HepG2 (cell line): ENCODE measurements at regions of chr6 and their contacts with region 1.

Region 1: DNA sequence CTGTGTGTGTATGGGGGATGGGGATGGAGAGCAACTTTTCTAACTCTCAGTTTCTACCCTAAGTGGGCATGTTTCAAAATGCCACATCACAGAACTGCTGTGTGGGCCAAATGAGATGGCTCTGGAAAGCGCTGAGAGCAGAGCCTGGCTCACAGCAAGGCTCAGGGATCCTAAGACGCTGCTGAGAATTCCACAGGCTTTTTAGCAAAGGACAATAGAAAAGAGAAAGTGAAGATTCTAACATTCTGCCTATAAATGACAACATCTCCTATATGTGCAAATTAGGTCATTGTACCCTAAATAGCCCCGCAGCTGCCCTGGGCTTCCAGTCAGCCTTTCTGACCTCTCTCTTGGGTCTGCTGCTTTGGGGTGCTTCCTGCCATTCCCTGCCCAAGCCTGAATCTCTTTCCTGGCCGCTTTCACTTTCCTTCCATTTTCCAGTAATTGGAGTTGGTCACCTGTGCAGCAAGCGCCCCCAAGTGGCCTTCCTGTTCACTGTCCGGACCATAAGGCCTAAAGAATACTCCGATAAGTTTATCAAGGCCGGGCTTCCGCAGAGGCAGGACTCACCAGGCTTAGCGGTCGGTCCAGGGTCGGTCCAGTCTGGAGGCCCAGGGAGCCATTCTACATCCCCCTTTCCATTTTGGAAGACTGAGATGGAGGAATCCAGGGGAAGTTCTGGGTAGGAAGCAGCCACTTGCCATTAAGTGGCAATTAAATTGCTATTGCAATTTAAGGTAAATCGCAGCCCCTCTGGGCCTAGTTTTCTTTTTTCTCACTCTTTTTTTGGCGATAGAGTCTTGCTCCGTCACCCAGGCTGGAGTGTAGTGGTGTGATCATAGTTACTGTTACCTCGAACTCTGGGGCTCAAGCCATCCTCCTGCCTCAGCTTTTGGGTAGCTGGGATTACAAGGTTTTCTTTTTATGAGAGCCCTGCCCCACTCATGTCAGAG is 6.6 kb upstream of the DDR1 start:
- DNase-seq: peak; percentile 91
- ATAC-seq: peak; percentile 84
- H3K4me3 ChIP-seq: peak overlapping the region; percentile 48 to 69 (median 49)
- H3K27ac ChIP-seq: no peak overlapping the region
- H3K4me1 ChIP-seq: peaks cover 48% of the 10 kb centered on the region
- H3K27me3 ChIP-seq: peaks cover 6 to 34% of the 10 kb centered on the region in 2 experiments
- CTCF ChIP-seq: peak; percentile 99
- EP300 ChIP-seq: peak in 1 of 2 experiments; percentile 28; a peak in 1 of 4 replicates
- POLR2A ChIP-seq: no peak
- RAD21 ChIP-seq: peak; percentile 97

Region 2: GRCh38 chr6:30678964-30679726 is 198.6 kb before region 1 on chr6:
- CTCF ChIA-PET with region 1: interaction called, 6 read pairs
- POLR2A ChIA-PET with region 1: no interaction called
- in situ Hi-C with region 1: no loop called
- intact Hi-C with region 1: loop called (anchors 1 kb)
- DNase-seq: peak; percentile 83
- ATAC-seq: peak; percentile 93
- H3K4me3 ChIP-seq: peak overlapping the region; percentile 43 to 66 (median 44)
- H3K27ac ChIP-seq: peak overlapping the region; percentile 32
- H3K4me1 ChIP-seq: peaks cover 41% of the 10 kb centered on the region
- H3K27me3 ChIP-seq: no peaks in the 10 kb centered on the region
- CTCF ChIP-seq: peak; percentile 100
- EP300 ChIP-seq: 0 out of 4 replicates have a peak, but pooled peaks of 1 of the 2 experiments have one; percentile 35
- POLR2A ChIP-seq: no peak
- RAD21 ChIP-seq: peak; percentile 99

Region 3: GRCh38 chr6:30821862-30822782 is 55.6 kb before region 1 on chr6:
- CTCF ChIA-PET with region 1: interaction called, 76 read pairs
- POLR2A ChIA-PET with region 1: interaction called, 20 read pairs
- in situ Hi-C with region 1: loop called (anchors 5 kb)
- intact Hi-C with region 1: no loop called
- DNase-seq: peak; percentile 70
- ATAC-seq: peak; percentile 49
- H3K4me3 ChIP-seq: peak overlapping the region in 2 of 3 experiments; percentile 20 to 35; a peak in 3 of 6 replicates
- H3K27ac ChIP-seq: peak overlapping the region; percentile 79
- H3K4me1 ChIP-seq: peaks cover 71% of the 10 kb centered on the region
- H3K27me3 ChIP-seq: no peaks in the 10 kb centered on the region
- CTCF ChIP-seq: peak; percentile 55
- EP300 ChIP-seq: no peak
- POLR2A ChIP-seq: no peak
- RAD21 ChIP-seq: peak; percentile 30; the same call in 1 of the 2 replicates

Region 4: GRCh38 chr6:30844091-30844535 is 33.6 kb before region 1 on chr6:
- CTCF ChIA-PET with region 1: no interaction called
- POLR2A ChIA-PET with region 1: no interaction called
- in situ Hi-C with region 1: no loop called
- intact Hi-C with region 1: loop called (anchors 5 kb)
- DNase-seq: peak; percentile 40
- ATAC-seq: peak; percentile 70
- H3K4me3 ChIP-seq: no peak overlapping the region
- H3K27ac ChIP-seq: no peak overlapping the region
- H3K4me1 ChIP-seq: peaks cover 29% of the 10 kb centered on the region
- H3K27me3 ChIP-seq: peaks cover 0 to 23% of the 10 kb centered on the region in 2 experiments; a peak in 3 of 5 replicates
- CTCF ChIP-seq: peak; percentile 34; the same call in 1 of the 2 replicates
- EP300 ChIP-seq: no peak
- POLR2A ChIP-seq: no peak
- RAD21 ChIP-seq: no peak

Region 5: GRCh38 chr6:30907758-30908591 is 30.3 kb after region 1 on chr6 and contains the start of gene GTF2H4:
- CTCF ChIA-PET with region 1: no interaction called
- POLR2A ChIA-PET with region 1: interaction called, 45 read pairs
- in situ Hi-C with region 1: no loop called
- intact Hi-C with region 1: loop called (anchors 2 kb)
- DNase-seq: peak; percentile 99
- ATAC-seq: peak; percentile 95
- H3K4me3 ChIP-seq: peak within 1 kb of the TSS; percentile 76 to 98 (median 82)
- H3K27ac ChIP-seq: peak within 1 kb of the TSS; percentile 59
- H3K4me1 ChIP-seq: peaks cover 35% of the 10 kb centered on the region
- H3K27me3 ChIP-seq: no peaks in the 10 kb centered on the region; a peak in 1 of 5 replicates
- CTCF ChIP-seq: peak; percentile 12; the same call in 1 of the 2 replicates
- EP300 ChIP-seq: peak in 1 of 2 experiments; percentile 47; a peak in 1 of 4 replicates
- POLR2A ChIP-seq: peak; percentile 54 to 68
- RAD21 ChIP-seq: peak; percentile 52; the same call in 1 of the 2 replicates
- total RNA-seq, gene GTF2H4: 15.9 and 18.0 TPM in 2 replicates

Region 6: GRCh38 chr6:31639449-31639861 is 761.8 kb after region 1 on chr6:
- CTCF ChIA-PET with region 1: no interaction called
- POLR2A ChIA-PET with region 1: no interaction called
- in situ Hi-C with region 1: no loop called
- intact Hi-C with region 1: no loop called
- DNase-seq: no peak
- ATAC-seq: peak; percentile 4
- H3K4me3 ChIP-seq: no peak overlapping the region
- H3K27ac ChIP-seq: no peak overlapping the region
- H3K4me1 ChIP-seq: peaks cover 18% of the 10 kb centered on the region
- H3K27me3 ChIP-seq: no peaks in the 10 kb centered on the region
- CTCF ChIP-seq: no peak
- EP300 ChIP-seq: no peak
- POLR2A ChIP-seq: no peak; a peak in 1 of 4 replicates
- RAD21 ChIP-seq: no peak